HEK293T (cell line): ENCODE measurements at regions of chrX and their contacts with region 1.

Region 1: DNA sequence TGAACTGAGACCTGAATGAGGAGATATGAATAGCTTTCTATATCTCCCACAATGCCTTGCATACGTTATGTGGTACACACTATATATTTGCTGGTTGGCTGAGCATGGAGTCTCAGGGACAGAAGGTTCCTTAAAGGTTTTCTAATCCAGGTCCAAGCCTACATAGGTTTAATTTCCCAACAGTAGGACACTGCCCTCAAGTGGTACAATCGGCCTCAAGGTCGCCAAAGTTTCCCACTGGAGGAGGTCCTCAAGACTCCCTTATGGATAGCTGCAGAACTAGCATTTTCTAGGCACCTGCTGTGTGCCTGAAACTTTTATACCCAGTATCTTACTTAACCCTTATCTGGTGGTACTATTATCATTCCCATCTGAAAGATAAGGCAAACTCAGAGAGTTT is 21.0 kb upstream of the EFNB1 start:
- DNase-seq: peak; percentile 44

Region 2: GRCh38 chrX:68732906-68733493 is 74.8 kb before region 1 on chrX:
- CTCF ChIA-PET with region 1: interaction called, 81 read pairs
- POLR2A ChIA-PET with region 1: interaction called, 3 read pairs
- DNase-seq: peak; percentile 82

Region 3: GRCh38 chrX:68867458-68868112 is 59.8 kb after region 1 on chrX:
- CTCF ChIA-PET with region 1: no interaction called
- POLR2A ChIA-PET with region 1: no interaction called
- DNase-seq: no peak